ENCODE measurements at regions of chrX and their contacts with region 1.

Region 1: DNA sequence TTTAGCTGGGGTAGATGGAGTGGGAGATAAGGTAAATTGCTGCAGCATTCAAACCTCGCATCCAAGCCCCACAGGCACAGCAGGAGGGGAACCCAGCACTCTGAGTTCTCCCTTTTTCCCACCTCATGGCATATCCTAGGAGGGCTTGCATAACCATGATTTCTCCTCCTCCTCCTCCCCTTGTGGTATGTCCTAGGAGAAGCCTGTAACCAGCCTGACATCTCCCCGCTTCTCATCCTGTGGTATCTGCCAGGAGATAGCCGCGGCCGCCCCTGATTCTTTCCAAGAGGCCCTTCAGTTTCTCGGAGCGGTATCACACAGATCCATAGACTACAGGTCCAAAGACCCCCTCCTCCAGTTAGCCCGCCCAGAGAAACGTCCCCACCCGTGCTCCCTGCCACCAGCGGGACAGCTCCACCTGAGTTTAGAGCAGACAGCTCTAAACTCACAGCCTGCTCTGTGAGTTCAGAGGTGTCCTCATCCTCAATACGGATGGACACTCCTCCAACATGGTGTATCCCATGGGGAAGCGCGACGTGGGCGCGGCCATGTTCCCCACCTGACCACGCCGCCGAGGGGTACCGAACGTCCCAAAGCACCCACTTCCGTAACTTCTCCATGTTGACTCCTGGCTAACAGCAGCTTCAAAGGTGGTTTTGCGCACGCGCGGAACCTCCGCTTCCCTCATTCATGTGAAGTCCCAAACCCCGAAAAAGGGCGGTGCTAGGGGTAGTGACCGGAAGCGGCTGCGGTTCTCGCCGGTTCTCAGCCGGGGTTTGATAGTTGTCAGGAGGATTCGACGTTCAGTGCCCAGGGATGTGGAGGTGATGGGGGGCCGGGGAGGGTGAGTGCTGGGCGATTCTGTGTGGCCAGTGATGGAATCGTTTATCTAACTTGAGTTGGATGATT is at the start of gene ZNF81:
- DNase-seq: peak; percentile 98
- H3K4me3 ChIP-seq: peak within 1 kb of the TSS; percentile 29 to 54 (median 52)
- H3K27ac ChIP-seq: peak within 1 kb of the TSS; percentile 71 to 77 (median 74)
- H3K4me1 ChIP-seq: peaks cover 0 to 12% (median 0%) of the 10 kb centered on the region in 4 donors
- H3K27me3 ChIP-seq: no peaks in the 10 kb centered on the region
- CTCF ChIP-seq: no peak
- EP300 ChIP-seq: no peak
- POLR2A ChIP-seq: peak in 1 of 2 donors; percentile 6
- total RNA-seq, gene ZNF81: 4.4 to 16.0 (median 8.1) TPM

Region 2: DNA sequence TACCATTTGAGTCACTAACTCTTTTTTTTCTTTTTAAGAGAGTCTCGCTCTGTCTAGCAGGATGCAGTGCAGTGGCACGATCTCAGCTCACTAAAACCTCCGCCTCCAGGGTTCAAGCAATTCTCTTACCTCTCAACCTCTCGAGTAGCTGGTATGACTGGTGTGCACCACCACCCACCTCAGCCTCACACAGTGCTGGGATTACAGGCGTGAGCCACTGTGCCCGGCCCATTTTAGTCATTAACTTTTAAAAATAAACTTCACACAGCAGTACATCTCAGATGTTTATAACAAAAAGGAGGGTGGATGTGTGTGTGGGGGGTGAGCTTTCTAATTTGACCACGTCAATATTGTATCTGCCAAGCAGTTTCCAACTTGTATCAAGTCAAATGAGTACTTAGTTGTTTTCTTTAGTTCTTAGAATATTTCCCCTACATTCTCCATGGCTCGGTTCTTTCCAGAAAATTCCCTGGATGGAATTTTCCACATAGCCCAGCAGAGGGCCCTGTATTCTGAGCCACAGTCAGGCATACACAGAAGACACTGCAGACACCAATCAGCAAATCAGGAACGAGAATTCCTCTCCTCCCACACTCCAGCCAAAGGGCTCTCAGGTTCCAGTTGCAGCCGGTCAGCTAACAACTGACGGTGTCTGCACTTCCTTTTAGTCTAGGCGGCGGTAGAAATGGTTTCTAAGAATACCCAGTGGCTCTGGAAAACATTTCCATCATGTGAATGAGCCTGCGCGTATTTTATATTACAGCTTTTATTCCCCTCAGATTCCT is 295.5 kb before region 1 on chrX:
- intact Hi-C with region 1: loop called (anchors 5 kb)
- DNase-seq: peak; percentile 93
- H3K4me3 ChIP-seq: no peak overlapping the region
- H3K27ac ChIP-seq: peak overlapping the region; percentile 72 to 81 (median 78)
- H3K4me1 ChIP-seq: peaks cover 0 to 18% (median 2%) of the 10 kb centered on the region in 4 donors
- H3K27me3 ChIP-seq: no peaks in the 10 kb centered on the region
- CTCF ChIP-seq: peak; percentile 31 to 60 (median 45)
- EP300 ChIP-seq: peak in 1 of 4 donors; percentile 39
- POLR2A ChIP-seq: no peak

Region 3: GRCh38 chrX:47658684-47659515 is 177.5 kb before region 1 on chrX and contains the start of gene UXT:
- intact Hi-C with region 1: loop called (anchors 5 kb)
- DNase-seq: peak; percentile 98
- H3K4me3 ChIP-seq: peak within 1 kb of the TSS; percentile 46 to 65 (median 60)
- H3K27ac ChIP-seq: peak within 1 kb of the TSS; percentile 91 to 93 (median 92)
- H3K4me1 ChIP-seq: peaks cover 0 to 4% (median 0%) of the 10 kb centered on the region in 4 donors
- H3K27me3 ChIP-seq: no peaks in the 10 kb centered on the region
- CTCF ChIP-seq: no peak
- EP300 ChIP-seq: no peak
- POLR2A ChIP-seq: peak; percentile 64 to 70
- total RNA-seq, gene UXT: 102 to 159 (median 143) TPM

Region 4: DNA sequence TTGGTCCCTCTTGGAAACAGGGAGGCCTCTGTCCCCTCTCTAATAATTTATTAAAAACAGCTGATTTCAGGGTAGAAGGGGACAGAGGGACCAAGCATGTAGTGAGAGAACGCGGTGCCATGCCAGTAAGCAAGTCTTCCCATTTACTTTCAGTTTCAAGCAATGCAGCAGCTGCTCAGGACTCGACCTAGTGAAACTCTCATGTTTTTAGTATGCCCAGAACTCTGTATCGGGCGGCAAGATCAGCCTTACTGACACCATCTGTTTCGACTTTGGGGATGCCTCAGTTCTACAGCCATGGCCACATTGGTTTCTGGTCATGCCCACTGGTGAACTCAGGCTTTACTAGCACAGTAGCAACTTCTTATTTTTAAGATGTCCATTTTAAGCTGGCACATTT is 40.9 kb after region 1 on chrX:
- intact Hi-C with region 1: no loop called
- DNase-seq: no peak
- H3K4me3 ChIP-seq: no peak overlapping the region
- H3K27ac ChIP-seq: no peak overlapping the region
- H3K4me1 ChIP-seq: no peaks in the 10 kb centered on the region
- H3K27me3 ChIP-seq: no peaks in the 10 kb centered on the region
- CTCF ChIP-seq: no peak
- EP300 ChIP-seq: no peak
- POLR2A ChIP-seq: no peak